ENCODE measurements at regions of chr5 and their contacts with region 1.

Region 1: GRCh38 chr5:134184155-134185135 is 7.7 kb upstream of the SKP1 start:
- DNase-seq: peak; percentile 59
- ATAC-seq: peak; percentile 99
- H3K4me3 Mint-ChIP-seq: no peak overlapping the region
- H3K27ac Mint-ChIP-seq: no peak overlapping the region
- H3K4me1 Mint-ChIP-seq: peaks cover 3% of the 10 kb centered on the region
- H3K27me3 Mint-ChIP-seq: no peaks in the 10 kb centered on the region
- CTCF ChIP-seq: no peak

Region 2: DNA sequence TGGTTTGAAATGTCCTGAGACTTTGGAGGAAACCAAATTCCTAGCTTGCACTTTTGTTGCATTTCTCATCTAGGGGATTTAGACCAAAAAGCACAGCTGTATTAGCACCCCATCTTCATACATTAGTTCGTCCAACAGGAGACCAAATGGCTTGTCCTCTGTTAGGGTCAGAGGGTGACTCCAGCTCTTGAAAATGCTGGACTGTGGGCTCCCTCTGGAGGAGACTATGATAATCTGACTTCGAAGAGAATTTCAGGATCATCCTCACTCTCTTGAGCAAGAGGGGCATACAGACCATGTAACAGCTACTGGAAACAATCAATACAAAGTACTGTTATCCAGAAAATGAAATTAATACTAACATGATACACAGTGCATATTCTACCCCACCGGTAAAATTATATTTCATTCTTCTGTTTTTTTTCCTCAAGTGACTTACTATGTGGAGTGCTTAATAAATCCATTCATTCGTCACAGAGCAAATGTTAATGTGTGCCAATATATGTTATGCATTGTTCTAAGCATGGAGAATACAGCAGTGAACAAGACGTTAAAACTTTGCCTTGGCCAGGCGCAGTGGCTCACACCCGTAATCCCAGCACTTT is 105.2 kb after region 1 on chr5:
- CTCF ChIA-PET with region 1: interaction called, 105 read pairs
- POLR2A ChIA-PET with region 1: interaction called, 4 read pairs
- intact Hi-C with region 1: loop called (anchors 1 kb)
- DNase-seq: no peak
- ATAC-seq: peak; percentile 68
- H3K4me3 Mint-ChIP-seq: no peak overlapping the region
- H3K27ac Mint-ChIP-seq: no peak overlapping the region
- H3K4me1 Mint-ChIP-seq: no peaks in the 10 kb centered on the region
- H3K27me3 Mint-ChIP-seq: peaks cover 5% of the 10 kb centered on the region
- CTCF ChIP-seq: no peak

Region 3: DNA sequence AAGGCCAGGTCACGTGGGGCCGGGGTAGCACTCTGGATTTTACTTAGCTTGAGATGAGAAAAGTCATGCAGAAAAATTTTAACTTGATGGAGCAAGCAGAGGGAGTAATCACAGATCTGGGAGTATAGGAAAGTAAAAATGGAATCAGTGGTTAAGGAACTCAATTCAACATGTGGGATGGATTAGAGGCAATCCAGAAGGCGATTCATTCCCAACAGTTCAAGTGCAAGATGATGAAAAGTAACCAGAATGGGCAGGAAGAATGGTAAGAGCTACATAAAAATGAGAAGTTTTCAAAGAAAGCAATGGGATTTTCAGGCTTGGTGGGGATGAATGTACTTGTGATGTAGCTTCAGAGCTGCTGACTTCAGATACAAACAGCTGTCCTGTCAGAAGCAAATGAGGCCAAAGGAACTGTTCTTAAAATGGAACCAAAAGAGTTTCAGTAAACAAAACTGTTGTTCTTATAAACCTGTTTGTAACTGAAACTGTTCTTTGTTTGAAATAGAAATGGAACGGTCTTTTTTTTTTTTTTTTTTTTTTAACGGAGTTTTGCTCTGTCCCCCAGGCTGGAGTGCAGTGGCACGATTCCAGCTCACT is 458.6 kb after region 1 on chr5:
- CTCF ChIA-PET with region 1: no interaction called
- POLR2A ChIA-PET with region 1: no interaction called
- intact Hi-C with region 1: no loop called
- DNase-seq: no peak
- ATAC-seq: no peak
- H3K4me3 Mint-ChIP-seq: no peak overlapping the region
- H3K27ac Mint-ChIP-seq: no peak overlapping the region
- H3K4me1 Mint-ChIP-seq: peaks cover 6% of the 10 kb centered on the region
- H3K27me3 Mint-ChIP-seq: no peaks in the 10 kb centered on the region
- CTCF ChIP-seq: no peak

Measured in activated B cell treated with CpG ODN at 0.5 μM for 24 hours (primary cell).